Testis (tissue), 5 donors: ENCODE measurements at regions of chr17 and their contacts with region 1.

Region 1: GRCh38 chr17:36117505-36118382 is 14.1 kb downstream of the CCL4 start:
- DNase-seq: no peak
- H3K4me3 ChIP-seq: no peak overlapping the region
- H3K27ac ChIP-seq: no peak overlapping the region
- H3K4me1 ChIP-seq: no peaks in the 10 kb centered on the region
- H3K27me3 ChIP-seq: no peaks in the 10 kb centered on the region
- CTCF ChIP-seq: no peak
- POLR2A ChIP-seq: no peak

Region 2: GRCh38 chr17:36183001-36183971 is 65.5 kb after region 1 on chr17:
- intact Hi-C with region 1: loop called (anchors 10 kb)
- DNase-seq: peak; percentile 70
- H3K4me3 ChIP-seq: peak overlapping the region; percentile 55 to 69
- H3K27ac ChIP-seq: peak overlapping the region; percentile 64 to 73
- H3K4me1 ChIP-seq: peaks cover 13% of the 10 kb centered on the region
- H3K27me3 ChIP-seq: no peaks in the 10 kb centered on the region
- CTCF ChIP-seq: no peak
- POLR2A ChIP-seq: no peak